GM23248 (cell line): ENCODE measurements at regions of chr12 and their contacts with region 1.

Region 1: DNA sequence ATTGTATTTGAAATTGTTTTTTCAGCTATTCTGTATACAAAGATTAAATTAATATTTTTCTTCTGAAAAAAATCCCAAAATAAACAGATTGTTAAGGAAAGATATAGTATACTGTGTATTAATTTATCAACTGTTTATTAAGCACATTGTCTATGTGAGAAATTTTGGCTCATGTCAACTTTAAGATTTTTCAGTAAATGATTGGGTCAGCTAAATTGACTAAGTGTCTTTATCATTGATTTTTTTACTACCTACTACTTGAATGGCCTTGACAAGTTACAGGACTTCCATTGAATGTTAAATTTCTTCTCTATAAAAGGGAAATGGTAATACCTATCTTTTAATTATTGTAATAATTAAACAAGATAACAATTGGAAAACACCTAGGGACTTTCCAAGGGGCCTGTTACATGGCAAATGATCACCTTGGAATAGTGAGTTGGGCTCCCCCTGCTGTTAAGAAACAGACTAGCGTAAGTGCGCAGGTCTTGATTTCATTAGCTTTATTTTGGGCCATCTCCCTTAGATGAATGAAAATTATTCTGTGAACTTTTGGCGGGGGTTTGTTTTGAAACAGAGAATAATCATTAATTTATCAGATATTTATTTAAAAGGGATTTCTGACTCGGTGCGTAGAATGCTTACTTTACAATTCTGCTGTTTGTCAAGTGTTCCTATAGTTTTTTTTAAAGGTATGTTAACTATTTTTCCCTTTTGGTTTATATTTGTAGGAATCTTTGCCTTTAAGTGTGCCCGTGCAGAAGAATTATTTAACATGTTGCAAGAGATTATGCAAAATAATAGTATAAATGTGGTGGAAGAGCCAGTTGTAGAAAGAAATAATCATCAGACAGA is 14.5 kb upstream of the CCT2 start:
- DNase-seq: peak; percentile 80
- H3K4me3 ChIP-seq: no peak overlapping the region
- H3K27ac ChIP-seq: no peak overlapping the region
- H3K4me1 ChIP-seq: peaks cover 30% of the 10 kb centered on the region
- H3K27me3 ChIP-seq: no peaks in the 10 kb centered on the region

Region 2: GRCh38 chr12:69024413-69024812 is 546.4 kb before region 1 on chr12:
- in situ Hi-C with region 1: no loop called
- DNase-seq: peak; percentile 96
- H3K4me3 ChIP-seq: peak overlapping the region; percentile 68
- H3K27ac ChIP-seq: peak overlapping the region; percentile 89
- H3K4me1 ChIP-seq: peaks cover 28% of the 10 kb centered on the region
- H3K27me3 ChIP-seq: no peaks in the 10 kb centered on the region

Region 3: GRCh38 chr12:69405466-69405865 is 165.3 kb before region 1 on chr12:
- in situ Hi-C with region 1: loop called (anchors 10 kb)
- DNase-seq: peak; percentile 97
- H3K4me3 ChIP-seq: peak overlapping the region; percentile 44
- H3K27ac ChIP-seq: peak overlapping the region; percentile 41
- H3K4me1 ChIP-seq: peaks cover 18% of the 10 kb centered on the region
- H3K27me3 ChIP-seq: no peaks in the 10 kb centered on the region

Region 4: DNA sequence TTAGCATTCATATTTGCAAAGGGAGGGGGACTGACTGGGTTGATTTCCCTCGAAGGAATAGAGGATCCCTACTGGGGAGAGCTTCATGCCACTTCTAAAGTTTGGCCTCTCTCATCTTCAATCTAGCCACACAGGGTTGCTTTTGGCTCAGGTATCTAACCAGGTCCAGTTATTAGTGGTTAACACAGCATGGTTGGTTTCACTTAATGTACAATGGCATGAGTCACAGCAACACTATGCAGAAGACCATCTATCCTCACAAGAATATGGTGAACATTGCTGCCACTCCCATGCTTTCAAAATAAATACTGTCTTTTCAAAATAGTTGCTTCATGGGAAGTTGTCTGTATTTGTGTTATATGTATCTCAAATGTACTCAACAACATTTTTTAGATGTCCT is 161.3 kb after region 1 on chr12:
- in situ Hi-C with region 1: no loop called
- DNase-seq: peak; percentile 10
- H3K4me3 ChIP-seq: no peak overlapping the region
- H3K27ac ChIP-seq: no peak overlapping the region
- H3K4me1 ChIP-seq: no peaks in the 10 kb centered on the region
- H3K27me3 ChIP-seq: no peaks in the 10 kb centered on the region

Region 5: DNA sequence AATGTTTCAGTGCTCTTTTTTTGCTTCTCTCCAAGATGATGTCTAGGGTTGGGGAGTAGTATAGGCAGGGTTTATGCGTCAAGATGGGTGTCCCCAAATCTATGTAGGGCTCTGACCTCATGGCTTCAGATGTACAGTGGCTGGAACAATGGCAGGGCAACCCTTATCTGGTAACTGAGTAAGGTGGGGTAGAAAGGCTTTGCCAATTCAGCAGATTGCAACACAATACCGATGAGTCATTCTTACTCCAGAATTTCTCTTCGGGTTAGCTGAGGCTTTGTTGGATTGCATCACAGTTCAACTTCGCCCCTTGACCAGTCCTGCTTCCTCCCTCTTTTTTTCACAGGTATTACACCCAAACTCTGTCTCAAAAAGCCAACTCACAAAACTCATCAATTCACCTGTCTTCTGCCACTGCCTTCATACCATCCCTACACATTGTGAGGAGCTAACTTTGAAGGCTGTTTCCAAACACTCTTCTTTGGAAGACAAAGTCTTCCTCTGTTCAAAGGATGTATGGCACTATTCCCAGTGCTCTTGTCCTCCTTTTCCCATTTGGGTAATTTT is 482.2 kb after region 1 on chr12:
- in situ Hi-C with region 1: no loop called
- DNase-seq: peak; percentile 80
- H3K4me3 ChIP-seq: no peak overlapping the region
- H3K27ac ChIP-seq: no peak overlapping the region
- H3K4me1 ChIP-seq: no peaks in the 10 kb centered on the region
- H3K27me3 ChIP-seq: no peaks in the 10 kb centered on the region